Activated CD4-positive, alpha-beta T cell treated with anti-CD3 and anti-CD28 coated beads, Interleukin-2, amount 10 ng/mL, durations not matched to agents 24 days and 14 days (primary cell): ENCODE measurements at regions of chr5 and their contacts with region 1.

Region 1: DNA sequence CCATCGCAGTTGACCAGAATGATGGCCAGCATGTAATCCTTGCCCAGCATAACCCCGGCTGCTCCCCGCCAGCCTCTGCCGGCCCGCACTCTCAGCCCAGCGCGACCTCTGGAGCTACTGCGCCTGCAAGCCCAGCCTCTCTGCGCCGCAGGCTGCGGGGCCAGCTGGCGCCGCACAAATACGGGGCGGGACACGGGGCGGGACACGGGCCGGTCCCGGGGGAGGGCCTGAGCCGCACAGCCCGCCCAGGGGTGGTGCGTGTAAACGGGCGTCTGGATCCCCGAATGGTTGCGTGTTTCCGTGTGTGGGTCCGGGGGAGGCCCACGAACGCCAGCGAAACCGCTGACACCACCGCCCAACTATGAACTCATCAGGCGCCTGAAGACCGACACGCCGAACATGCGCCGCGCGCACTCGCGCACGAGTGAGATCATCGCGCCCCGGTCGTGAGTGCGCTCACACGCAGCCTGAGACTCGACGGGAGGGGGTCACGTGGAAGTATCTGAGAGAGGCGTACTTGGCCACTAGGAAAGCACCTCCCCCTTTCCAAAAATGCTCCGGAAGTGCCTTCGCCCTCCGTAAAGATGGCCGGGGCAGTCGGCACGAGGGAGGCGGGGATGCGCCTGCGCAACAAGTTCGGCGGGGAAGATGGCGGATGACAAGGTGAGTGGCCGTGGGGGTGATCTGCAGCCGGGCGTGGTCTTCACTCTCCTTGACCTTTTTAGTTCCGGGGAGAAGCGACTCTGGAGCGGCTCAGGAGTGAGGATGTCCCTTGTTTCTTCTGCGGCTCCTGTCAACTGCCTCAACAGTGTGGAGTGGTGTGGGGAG is at the starts of genes APBB3 and SLC35A4:
- DNase-seq: peak; percentile 99
- H3K4me3 Mint-ChIP-seq: peak within 1 kb of the TSS; percentile 93
- H3K27ac Mint-ChIP-seq: peak within 1 kb of the TSS; percentile 95
- H3K4me1 Mint-ChIP-seq: peaks cover 53% of the 10 kb centered on the region
- H3K27me3 Mint-ChIP-seq: no peaks in the 10 kb centered on the region
- total RNA-seq, gene APBB3: 16.5 and 17.8 TPM in 2 replicates
- total RNA-seq, gene SLC35A4: 105 and 106 TPM in 2 replicates

Region 2: GRCh38 chr5:140547508-140548299 is 16.7 kb before region 1 on chr5 and contains the start of gene EIF4EBP3:
- intact Hi-C with region 1: loop called (anchors 1 kb)
- DNase-seq: peak; percentile 96
- H3K4me3 Mint-ChIP-seq: peak within 1 kb of the TSS; percentile 82
- H3K27ac Mint-ChIP-seq: peak within 1 kb of the TSS; percentile 89
- H3K4me1 Mint-ChIP-seq: peaks cover 26% of the 10 kb centered on the region
- H3K27me3 Mint-ChIP-seq: no peaks in the 10 kb centered on the region
- total RNA-seq, gene EIF4EBP3: 13.8 and 13.9 TPM in 2 replicates

Region 3: GRCh38 chr5:140632150-140633020 is 68.0 kb after region 1 on chr5:
- intact Hi-C with region 1: loop called (anchors 1 kb)
- DNase-seq: peak; percentile 84
- H3K4me3 Mint-ChIP-seq: peak overlapping the region; percentile 81
- H3K27ac Mint-ChIP-seq: peak overlapping the region; percentile 60
- H3K4me1 Mint-ChIP-seq: peaks cover 23% of the 10 kb centered on the region
- H3K27me3 Mint-ChIP-seq: peaks cover 18% of the 10 kb centered on the region

Region 4: DNA sequence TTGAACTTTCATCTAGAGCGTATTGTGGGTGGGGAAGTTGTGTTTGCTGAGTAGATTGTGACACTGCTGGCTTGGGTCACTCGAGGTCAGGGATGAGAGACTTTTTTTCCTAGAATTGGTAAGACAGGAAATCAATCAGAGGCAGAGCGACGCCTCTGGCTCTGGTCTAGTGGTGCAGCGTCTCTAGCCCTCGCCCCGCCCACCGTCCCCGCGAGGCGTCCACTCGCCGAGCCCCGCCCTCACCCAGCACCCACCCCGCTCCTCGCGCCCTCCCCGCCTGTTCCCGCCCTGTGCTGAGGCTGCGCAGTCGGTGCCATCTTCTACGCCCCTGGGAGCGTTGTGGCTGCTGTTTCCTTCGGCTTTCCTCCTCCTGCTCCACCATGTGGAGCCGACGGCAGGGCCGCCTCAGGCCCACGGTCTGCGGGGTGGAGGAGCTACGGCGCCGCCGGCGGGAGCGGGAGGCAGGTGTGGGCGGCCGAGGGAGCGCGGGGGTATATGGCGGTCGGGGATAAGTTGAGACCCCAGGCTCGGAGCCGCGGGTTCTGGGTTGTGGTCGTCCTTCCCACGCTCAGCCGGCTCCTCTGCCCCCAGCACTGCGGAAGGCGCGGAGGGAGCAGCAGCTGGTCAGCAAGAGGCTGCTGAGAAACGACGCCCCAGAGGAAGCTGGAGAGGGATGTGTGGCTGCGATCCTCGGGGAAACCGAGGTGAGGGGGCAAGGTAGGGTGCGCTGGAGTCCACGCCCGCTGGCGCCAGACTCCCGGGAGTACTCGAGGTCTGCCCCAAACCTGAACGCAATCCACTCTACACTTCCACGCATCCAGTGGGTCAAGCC is 75.0 kb after region 1 on chr5 and contains the start of gene TMCO6:
- intact Hi-C with region 1: loop called (anchors 1 kb)
- DNase-seq: peak; percentile 98
- H3K4me3 Mint-ChIP-seq: peak within 1 kb of the TSS; percentile 86
- H3K27ac Mint-ChIP-seq: peak within 1 kb of the TSS; percentile 90
- H3K4me1 Mint-ChIP-seq: peaks cover 37% of the 10 kb centered on the region
- H3K27me3 Mint-ChIP-seq: no peaks in the 10 kb centered on the region
- total RNA-seq, gene TMCO6: 38.1 and 41.9 TPM in 2 replicates

Region 5: GRCh38 chr5:140647042-140647341 is 82.6 kb after region 1 on chr5:
- intact Hi-C with region 1: loop called (anchors 1 kb)
- DNase-seq: no peak
- H3K4me3 Mint-ChIP-seq: peak overlapping the region; percentile 94
- H3K27ac Mint-ChIP-seq: peak overlapping the region; percentile 98
- H3K4me1 Mint-ChIP-seq: peaks cover 28% of the 10 kb centered on the region
- H3K27me3 Mint-ChIP-seq: no peaks in the 10 kb centered on the region

Region 6: GRCh38 chr5:140664359-140665119 is 100.1 kb after region 1 on chr5 and contains the start of gene WDR55:
- intact Hi-C with region 1: loop called (anchors 1 kb)
- DNase-seq: peak; percentile 99
- H3K4me3 Mint-ChIP-seq: peak within 1 kb of the TSS; percentile 100
- H3K27ac Mint-ChIP-seq: peak within 1 kb of the TSS; percentile 98
- H3K4me1 Mint-ChIP-seq: peaks cover 26% of the 10 kb centered on the region
- H3K27me3 Mint-ChIP-seq: no peaks in the 10 kb centered on the region
- total RNA-seq, gene WDR55: 41.6 and 42.9 TPM in 2 replicates

Region 7: DNA sequence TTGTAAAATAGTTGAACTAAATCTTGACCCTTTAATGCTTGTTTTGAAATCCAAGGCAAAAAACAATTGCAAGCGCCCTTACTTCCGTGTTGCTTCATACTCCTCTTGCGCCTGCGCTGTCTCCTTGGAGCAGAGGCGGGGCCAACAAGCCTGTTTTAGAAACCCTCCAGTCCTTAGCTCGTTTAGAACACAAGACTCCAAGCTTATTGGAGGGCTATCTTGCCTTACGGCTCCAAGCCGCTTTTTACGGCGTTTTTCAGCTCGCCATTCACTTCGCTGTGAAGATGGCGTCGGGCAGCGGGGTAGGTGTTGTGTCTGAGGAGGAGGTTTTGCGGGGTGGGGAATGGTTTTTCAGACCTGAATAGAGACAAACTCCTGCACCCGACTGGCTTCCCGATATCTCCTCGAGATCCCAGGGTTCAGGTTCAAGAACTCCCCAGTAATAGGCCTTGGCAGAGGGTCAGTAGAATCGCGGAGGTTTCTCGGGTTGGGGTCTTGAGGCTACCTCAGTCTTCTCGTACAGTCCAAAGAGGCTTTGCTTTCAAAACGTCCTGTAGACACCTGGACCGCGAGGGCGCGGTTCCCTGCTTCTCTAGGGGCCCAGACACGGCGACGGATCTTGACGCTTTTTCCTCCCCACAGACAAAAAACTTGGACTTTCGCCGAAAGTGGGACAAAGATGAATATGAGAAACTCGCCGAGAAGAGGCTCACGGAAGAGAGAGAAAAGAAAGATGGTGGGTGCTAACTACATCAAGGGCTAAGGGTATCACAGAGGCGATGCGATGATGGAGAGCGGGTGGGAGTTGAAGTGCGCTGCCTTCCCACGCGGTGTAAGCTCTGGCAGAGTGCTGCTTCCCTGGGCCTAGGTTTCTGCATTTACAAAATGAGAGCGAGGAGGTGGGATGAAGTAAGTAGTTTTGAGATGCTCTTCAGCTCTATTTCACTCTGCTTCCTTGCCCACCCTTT is 136.1 kb after region 1 on chr5 and contains the start of gene ZMAT2:
- intact Hi-C with region 1: loop called (anchors 2 kb)
- DNase-seq: peak; percentile 98
- H3K4me3 Mint-ChIP-seq: peak within 1 kb of the TSS; percentile 99
- H3K27ac Mint-ChIP-seq: peak within 1 kb of the TSS; percentile 96
- H3K4me1 Mint-ChIP-seq: peaks cover 24% of the 10 kb centered on the region
- H3K27me3 Mint-ChIP-seq: no peaks in the 10 kb centered on the region
- total RNA-seq, gene ZMAT2: 67.1 and 67.2 TPM in 2 replicates